K562 (cell line): ENCODE measurements at regions of chr19 and their contacts with region 1.

Region 1: GRCh38 chr19:13588957-13589833 is 82.9 kb upstream of the CACNA1A start:
- DNase-seq: peak; percentile 71 to 83 (median 78)
- ATAC-seq: peak; percentile 98
- H3K4me3 ChIP-seq: no peak overlapping the region
- H3K27ac ChIP-seq: no peak overlapping the region
- H3K4me1 ChIP-seq: peaks cover 0 to 7% of the 10 kb centered on the region in 2 experiments; a peak in 1 of 5 replicates
- H3K27me3 ChIP-seq: peaks cover 0 to 4% of the 10 kb centered on the region in 2 experiments; a peak in 1 of 5 replicates
- CTCF ChIP-seq: peak; percentile 88 to 95 (median 93)
- EP300 ChIP-seq: no peak
- POLR2A ChIP-seq: no peak
- RAD21 ChIP-seq: peak; percentile 71 to 85

Region 2: DNA sequence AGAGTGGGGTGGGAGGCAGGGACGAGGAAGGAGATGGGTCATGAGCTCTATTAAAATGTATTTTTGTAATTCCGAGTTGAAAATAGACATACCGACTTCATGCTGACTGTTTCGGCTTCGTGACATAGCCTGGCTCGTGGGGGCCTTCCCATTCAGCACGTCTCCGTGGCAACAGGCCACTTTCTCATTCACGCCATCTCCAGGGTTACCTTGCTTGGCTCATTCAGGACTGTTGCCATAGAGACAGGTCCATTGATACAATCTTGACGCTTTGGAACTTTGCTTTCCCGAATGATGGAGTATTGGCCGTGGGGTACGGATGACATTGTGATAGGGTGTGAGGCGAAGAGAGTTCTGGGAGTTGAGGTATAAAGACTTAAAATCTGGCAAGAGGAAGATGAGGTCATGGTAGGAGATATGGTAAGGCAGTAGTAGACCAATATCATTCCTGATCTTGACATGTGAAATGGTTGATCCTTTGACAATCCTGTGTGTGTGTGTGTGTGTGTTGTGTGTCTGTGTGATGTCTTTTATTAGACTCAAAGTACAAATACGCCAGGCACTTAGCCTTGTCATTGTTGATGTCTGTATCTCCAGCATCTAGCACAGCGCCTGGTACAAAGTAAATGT is 180.2 kb before region 1 on chr19:
- CTCF ChIA-PET with region 1: no interaction called
- POLR2A ChIA-PET with region 1: no interaction called
- in situ Hi-C with region 1: no loop called
- intact Hi-C with region 1: no loop called
- DNase-seq: no peak
- ATAC-seq: no peak
- H3K4me3 ChIP-seq: no peak overlapping the region
- H3K27ac ChIP-seq: no peak overlapping the region
- H3K4me1 ChIP-seq: no peaks in the 10 kb centered on the region
- H3K27me3 ChIP-seq: peaks cover 0 to 6% of the 10 kb centered on the region in 2 experiments; a peak in 2 of 5 replicates
- CTCF ChIP-seq: no peak
- EP300 ChIP-seq: no peak
- POLR2A ChIP-seq: no peak
- RAD21 ChIP-seq: no peak

Region 3: DNA sequence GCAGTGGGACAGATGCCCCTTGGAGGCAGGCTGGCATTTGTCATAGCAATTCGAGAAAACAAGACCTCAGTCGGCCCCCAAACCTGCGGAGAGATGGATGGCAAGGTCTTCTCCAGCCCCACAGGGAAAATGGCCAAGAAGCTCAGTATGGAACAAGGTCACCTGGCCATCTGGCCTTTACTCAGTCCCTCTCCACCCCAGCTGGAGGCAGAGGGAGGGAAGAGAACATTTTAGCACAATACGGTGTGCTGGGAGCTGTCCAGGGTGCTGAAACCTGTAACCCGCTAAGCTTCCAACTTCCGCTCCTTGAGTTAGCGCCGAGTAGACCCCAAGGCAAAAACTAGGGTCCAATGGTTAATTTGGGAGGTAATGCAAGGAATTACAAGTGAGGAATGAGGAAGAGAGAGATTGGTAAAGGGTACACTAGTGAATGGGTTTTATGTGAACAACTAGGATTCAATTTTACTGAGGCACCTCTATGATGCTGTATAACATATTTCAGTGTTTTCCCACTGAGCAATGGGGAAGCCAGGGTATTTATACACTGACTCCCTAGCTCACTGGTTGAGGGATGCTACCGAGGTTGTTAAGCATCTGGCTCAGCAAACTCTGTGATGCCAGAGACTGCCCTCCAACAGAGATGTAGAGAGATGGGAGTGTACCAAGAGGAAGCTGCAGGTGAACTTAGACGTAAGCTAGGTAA is 147.2 kb before region 1 on chr19:
- CTCF ChIA-PET with region 1: no interaction called
- POLR2A ChIA-PET with region 1: no interaction called
- in situ Hi-C with region 1: no loop called
- intact Hi-C with region 1: loop called (anchors 10 kb)
- DNase-seq: peak; percentile 64 to 74 (median 68)
- ATAC-seq: peak; percentile 79
- H3K4me3 ChIP-seq: no peak overlapping the region
- H3K27ac ChIP-seq: no peak overlapping the region
- H3K4me1 ChIP-seq: no peaks in the 10 kb centered on the region
- H3K27me3 ChIP-seq: no peaks in the 10 kb centered on the region; a peak in 1 of 5 replicates
- CTCF ChIP-seq: no peak
- EP300 ChIP-seq: no peak
- POLR2A ChIP-seq: no peak
- RAD21 ChIP-seq: no peak

Region 4: DNA sequence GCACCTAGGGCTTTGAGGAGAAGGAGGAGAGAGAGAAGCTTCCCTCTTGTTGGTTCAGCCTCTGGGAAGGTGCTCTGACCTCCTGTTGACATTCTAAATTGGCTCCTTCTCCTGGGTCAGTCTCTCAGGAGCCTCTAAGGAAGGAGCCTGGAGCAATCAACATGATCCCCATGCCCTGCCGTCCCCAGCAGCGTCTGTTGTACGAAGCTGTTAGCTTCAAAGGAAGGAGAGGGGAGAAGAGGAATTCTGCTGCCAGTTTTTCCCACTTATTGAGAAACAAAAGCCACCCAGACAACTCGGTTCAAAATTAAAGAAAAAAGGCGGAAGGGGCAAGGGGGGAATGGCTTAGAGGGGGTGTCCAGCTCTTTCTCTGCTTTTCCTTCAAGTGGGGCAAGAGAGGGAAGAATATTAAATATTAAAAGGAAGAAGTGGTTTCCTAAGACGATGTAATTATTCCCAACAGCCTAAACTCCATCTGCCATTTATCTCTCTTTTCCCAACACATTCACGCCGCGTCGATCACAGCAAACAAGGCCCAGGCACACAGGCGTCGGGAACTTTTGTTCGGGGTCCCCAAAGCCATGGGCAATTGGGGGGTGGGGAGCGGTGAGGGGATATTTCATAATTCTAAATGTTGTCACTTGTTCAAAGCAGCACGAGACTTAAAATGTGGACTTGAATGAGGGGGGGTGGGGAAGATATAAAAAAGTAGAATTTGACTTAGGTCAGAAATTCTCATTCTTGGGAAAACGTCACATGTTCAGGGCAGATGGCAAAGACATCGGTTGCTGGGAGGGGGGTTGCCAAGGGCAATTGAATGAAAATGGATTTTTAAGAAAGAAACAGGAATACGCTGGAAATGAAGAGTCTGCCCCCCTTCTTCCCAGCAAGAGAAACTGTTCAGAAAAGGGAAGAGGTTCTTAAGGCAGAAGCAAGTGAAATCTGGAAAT is 33.8 kb after region 1 on chr19:
- CTCF ChIA-PET with region 1: no interaction called
- POLR2A ChIA-PET with region 1: no interaction called
- in situ Hi-C with region 1: no loop called
- intact Hi-C with region 1: no loop called
- DNase-seq: no peak
- ATAC-seq: no peak
- H3K4me3 ChIP-seq: no peak overlapping the region
- H3K27ac ChIP-seq: no peak overlapping the region
- H3K4me1 ChIP-seq: no peaks in the 10 kb centered on the region
- H3K27me3 ChIP-seq: peaks cover 23 to 45% of the 10 kb centered on the region in 2 experiments; a peak in 4 of 5 replicates
- CTCF ChIP-seq: no peak
- EP300 ChIP-seq: no peak
- POLR2A ChIP-seq: no peak
- RAD21 ChIP-seq: no peak

Region 5: GRCh38 chr19:14073261-14073924 is 484.2 kb after region 1 on chr19:
- CTCF ChIA-PET with region 1: no interaction called
- POLR2A ChIA-PET with region 1: no interaction called
- in situ Hi-C with region 1: loop called (anchors 25 kb)
- intact Hi-C with region 1: no loop called
- DNase-seq: peak; percentile 82 to 85 (median 83)
- ATAC-seq: peak; percentile 76
- H3K4me3 ChIP-seq: peak overlapping the region; percentile 55
- H3K27ac ChIP-seq: peak overlapping the region; percentile 68
- H3K4me1 ChIP-seq: peaks cover 9 to 48% of the 10 kb centered on the region in 2 experiments; a peak in 4 of 5 replicates
- H3K27me3 ChIP-seq: no peaks in the 10 kb centered on the region
- CTCF ChIP-seq: peak; percentile 17 to 88 (median 75); a peak in 5 of 6 replicates
- EP300 ChIP-seq: no peak
- POLR2A ChIP-seq: 0 out of 2 replicates have a peak, but pooled peaks have one; percentile 32
- RAD21 ChIP-seq: peak in 1 of 2 experiments; percentile 65; a peak in 3 of 4 replicates